ENCODE measurements at regions of chr2 and their contacts with region 1.

Region 1: GRCh38 chr2:193240752-193241151 is 1046.0 kb upstream of the TMEFF2 start:
- DNase-seq: no peak
- ATAC-seq: no peak
- H3K4me3 ChIP-seq: no peak overlapping the region
- H3K4me3 Mint-ChIP-seq: no peak overlapping the region
- H3K27ac ChIP-seq: no peak overlapping the region
- H3K27ac Mint-ChIP-seq: no peak overlapping the region
- H3K4me1 ChIP-seq: no peaks in the 10 kb centered on the region
- H3K4me1 Mint-ChIP-seq: no peaks in the 10 kb centered on the region
- H3K27me3 ChIP-seq: no peaks in the 10 kb centered on the region
- H3K27me3 Mint-ChIP-seq: no peaks in the 10 kb centered on the region
- CTCF ChIP-seq: no peak

Region 2: GRCh38 chr2:193279361-193279760 is 38.6 kb after region 1 on chr2:
- CTCF ChIA-PET with region 1: no interaction called
- POLR2A ChIA-PET with region 1: no interaction called
- intact Hi-C with region 1: no loop called
- DNase-seq: no peak
- ATAC-seq: no peak
- H3K4me3 ChIP-seq: no peak overlapping the region
- H3K4me3 Mint-ChIP-seq: no peak overlapping the region
- H3K27ac ChIP-seq: no peak overlapping the region
- H3K27ac Mint-ChIP-seq: no peak overlapping the region
- H3K4me1 ChIP-seq: no peaks in the 10 kb centered on the region
- H3K4me1 Mint-ChIP-seq: no peaks in the 10 kb centered on the region
- H3K27me3 ChIP-seq: no peaks in the 10 kb centered on the region
- H3K27me3 Mint-ChIP-seq: no peaks in the 10 kb centered on the region
- CTCF ChIP-seq: no peak

Region 3: GRCh38 chr2:193907561-193907960 is 666.8 kb after region 1 on chr2:
- CTCF ChIA-PET with region 1: no interaction called
- POLR2A ChIA-PET with region 1: no interaction called
- intact Hi-C with region 1: loop called in 1 of 2 experiments (anchors 10 kb)
- DNase-seq: no peak
- ATAC-seq: no peak
- H3K4me3 ChIP-seq: no peak overlapping the region
- H3K4me3 Mint-ChIP-seq: no peak overlapping the region
- H3K27ac ChIP-seq: no peak overlapping the region
- H3K27ac Mint-ChIP-seq: no peak overlapping the region
- H3K4me1 ChIP-seq: no peaks in the 10 kb centered on the region
- H3K4me1 Mint-ChIP-seq: no peaks in the 10 kb centered on the region
- H3K27me3 ChIP-seq: no peaks in the 10 kb centered on the region
- H3K27me3 Mint-ChIP-seq: no peaks in the 10 kb centered on the region
- CTCF ChIP-seq: no peak

Measured in CD4-positive, alpha-beta T cell (primary cell).